ENCODE measurements at regions of chr12 and their contacts with region 1.

Region 1: GRCh38 chr12:5417500-5417899 is 14.4 kb upstream of the NTF3 start:
- DNase-seq: no peak
- ATAC-seq: no peak
- H3K4me3 ChIP-seq: no peak overlapping the region
- H3K27ac ChIP-seq: no peak overlapping the region
- H3K4me1 ChIP-seq: no peaks in the 10 kb centered on the region
- H3K27me3 ChIP-seq: peaks cover 0 to 7% of the 10 kb centered on the region in 2 donors
- CTCF ChIP-seq: no peak

Region 2: DNA sequence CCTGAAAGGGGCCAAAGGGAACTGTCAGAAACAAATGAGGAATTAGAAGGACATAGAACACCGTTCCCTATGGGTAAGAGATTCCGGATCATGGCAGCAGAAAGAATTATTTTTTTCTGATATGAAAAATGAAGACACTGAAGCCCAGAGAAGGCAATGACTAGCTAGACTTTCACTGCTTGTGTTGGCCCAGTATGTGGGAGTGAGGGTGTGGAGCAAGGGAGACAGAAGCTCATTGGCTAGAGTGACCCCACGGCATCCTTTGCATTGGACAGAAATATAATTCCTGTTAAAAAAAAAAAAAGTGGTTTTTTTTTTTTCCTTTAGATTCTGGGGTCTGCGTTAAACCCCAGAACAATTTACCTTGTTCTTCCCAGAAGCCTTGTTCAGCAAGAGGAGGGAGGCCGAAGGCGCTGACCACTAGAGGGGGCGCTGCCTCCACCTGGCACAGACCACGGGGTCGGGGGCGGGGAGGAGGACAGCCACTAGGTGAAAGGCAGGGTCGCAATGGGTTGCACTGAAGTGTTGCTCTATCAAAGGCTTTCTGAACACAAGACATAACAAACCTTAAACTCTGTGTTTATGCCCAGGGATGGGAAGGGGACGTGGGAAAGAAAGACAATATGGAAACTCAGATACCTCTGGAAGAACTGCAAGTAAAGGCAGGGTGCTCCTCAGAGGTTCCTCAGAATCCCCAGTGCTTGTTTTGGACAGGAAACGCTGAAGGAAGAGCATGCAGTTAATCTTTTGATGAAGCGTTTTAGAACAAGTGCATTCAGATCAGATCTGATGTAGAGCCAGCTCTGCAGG is 217.0 kb before region 1 on chr12:
- intact Hi-C with region 1: loop called in 1 of 2 experiments (anchors 10 kb)
- DNase-seq: peak in 2 of 4 donors; percentile 43 to 75
- ATAC-seq: peak; percentile 77
- H3K4me3 ChIP-seq: no peak overlapping the region
- H3K27ac ChIP-seq: no peak overlapping the region
- H3K4me1 ChIP-seq: no peaks in the 10 kb centered on the region
- H3K27me3 ChIP-seq: peaks cover 0 to 26% of the 10 kb centered on the region in 2 donors
- CTCF ChIP-seq: peak; percentile 27 to 41

Region 3: GRCh38 chr12:5348491-5348890 is 69.0 kb before region 1 on chr12:
- intact Hi-C with region 1: no loop called
- DNase-seq: no peak
- ATAC-seq: no peak
- H3K4me3 ChIP-seq: no peak overlapping the region
- H3K27ac ChIP-seq: no peak overlapping the region
- H3K4me1 ChIP-seq: no peaks in the 10 kb centered on the region
- H3K27me3 ChIP-seq: no peaks in the 10 kb centered on the region
- CTCF ChIP-seq: no peak

Region 4: DNA sequence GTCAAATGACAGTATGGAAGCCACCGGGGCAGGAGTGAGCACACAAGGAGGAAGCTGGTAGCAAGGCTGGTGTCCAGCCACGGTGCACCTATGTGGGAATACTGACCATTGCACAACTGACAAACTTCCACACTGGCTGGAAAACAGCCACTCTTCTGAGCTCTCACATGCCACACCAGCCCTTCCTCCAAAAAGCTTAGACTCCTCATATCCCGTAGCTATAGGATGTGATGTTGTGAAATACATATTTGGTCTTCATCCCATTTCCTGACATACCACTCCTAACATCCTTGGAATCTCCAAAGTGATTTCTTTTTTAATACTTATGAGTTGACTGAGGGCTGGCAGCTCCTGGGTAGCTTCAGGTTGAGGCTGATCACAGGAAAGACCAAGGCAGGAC is 118.0 kb after region 1 on chr12:
- intact Hi-C with region 1: no loop called
- DNase-seq: no peak
- ATAC-seq: no peak
- H3K4me3 ChIP-seq: no peak overlapping the region
- H3K27ac ChIP-seq: no peak overlapping the region
- H3K4me1 ChIP-seq: no peaks in the 10 kb centered on the region
- H3K27me3 ChIP-seq: no peaks in the 10 kb centered on the region
- CTCF ChIP-seq: no peak

Measured in left lung (tissue), 14 donors.